PC-9 (cell line): ENCODE measurements at regions of chr17 and their contacts with region 1.

Region 1: GRCh38 chr17:81808778-81809555 is 5.0 kb downstream of the GCGR start:
- DNase-seq: no peak
- H3K4me3 ChIP-seq: no peak overlapping the region
- H3K27ac ChIP-seq: no peak overlapping the region
- H3K4me1 ChIP-seq: no peaks in the 10 kb centered on the region
- H3K27me3 ChIP-seq: peaks cover 33% of the 10 kb centered on the region; the same call in 1 of the 2 replicates
- CTCF ChIP-seq: no peak; the same call in 1 of the 2 replicates

Region 2: GRCh38 chr17:80235715-80236114 is 1573.3 kb before region 1 on chr17:
- CTCF ChIA-PET with region 1: no interaction called
- POLR2A ChIA-PET with region 1: interaction called, 34 read pairs
- intact Hi-C with region 1: no loop called
- DNase-seq: no peak
- H3K4me3 ChIP-seq: no peak overlapping the region
- H3K27ac ChIP-seq: no peak overlapping the region
- H3K4me1 ChIP-seq: no peaks in the 10 kb centered on the region
- H3K27me3 ChIP-seq: no peaks in the 10 kb centered on the region
- CTCF ChIP-seq: no peak

Region 3: GRCh38 chr17:81621494-81622130 is 187.4 kb before region 1 on chr17:
- CTCF ChIA-PET with region 1: no interaction called
- POLR2A ChIA-PET with region 1: no interaction called
- intact Hi-C with region 1: no loop called
- DNase-seq: no peak
- H3K4me3 ChIP-seq: no peak overlapping the region
- H3K27ac ChIP-seq: no peak overlapping the region
- H3K4me1 ChIP-seq: no peaks in the 10 kb centered on the region
- H3K27me3 ChIP-seq: no peaks in the 10 kb centered on the region
- CTCF ChIP-seq: no peak

Region 4: DNA sequence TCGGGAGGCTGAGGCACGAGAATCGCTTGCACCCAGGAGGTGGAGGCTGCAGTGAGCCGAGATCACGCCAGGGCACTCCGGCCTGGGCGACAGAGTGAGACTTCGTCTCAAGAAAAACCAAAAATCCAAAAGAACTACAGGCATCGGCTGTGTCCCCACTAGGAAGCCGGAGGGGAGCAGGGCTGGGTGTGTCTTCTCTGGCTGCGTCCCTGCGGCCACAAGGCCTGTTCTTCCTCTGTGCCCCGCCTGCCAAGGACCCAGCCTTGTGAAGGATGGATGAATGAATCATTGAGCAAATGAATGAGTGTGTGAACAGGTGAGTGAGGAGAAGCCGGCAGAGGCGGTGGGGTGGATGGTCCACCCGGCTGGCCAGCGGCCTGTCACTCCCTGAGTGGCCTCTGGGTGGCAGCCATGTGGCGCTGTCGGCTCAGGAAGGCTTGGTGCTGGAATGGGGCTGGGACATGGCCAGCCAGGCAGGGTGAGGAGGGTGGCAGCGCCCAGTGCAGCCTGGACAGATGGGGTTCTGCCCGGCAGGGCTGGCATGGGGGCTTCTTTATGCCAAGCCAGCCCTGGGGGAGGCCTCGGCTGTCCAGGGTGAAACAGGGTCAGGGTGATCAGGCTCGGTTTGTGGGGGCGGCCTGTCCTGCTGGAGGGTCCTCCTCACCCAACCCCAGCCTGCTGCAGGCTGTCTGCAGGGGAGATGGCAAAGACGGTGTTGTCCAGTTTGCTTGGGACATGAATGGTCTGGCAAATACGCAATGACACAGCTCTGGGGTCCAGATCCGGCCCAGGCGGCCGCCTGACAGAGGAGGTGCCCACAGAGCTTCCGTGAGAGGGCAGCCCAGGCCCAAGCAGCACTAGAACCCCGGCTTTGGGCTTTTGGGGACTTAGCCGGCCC is 75.2 kb before region 1 on chr17:
- CTCF ChIA-PET with region 1: interaction called, 10 read pairs
- POLR2A ChIA-PET with region 1: no interaction called
- intact Hi-C with region 1: no loop called
- DNase-seq: peak; percentile 55 to 92
- H3K4me3 ChIP-seq: no peak overlapping the region
- H3K27ac ChIP-seq: no peak overlapping the region
- H3K4me1 ChIP-seq: no peaks in the 10 kb centered on the region
- H3K27me3 ChIP-seq: no peaks in the 10 kb centered on the region
- CTCF ChIP-seq: peak; percentile 81

Region 5: GRCh38 chr17:81821603-81822311 is 12.8 kb after region 1 on chr17:
- CTCF ChIA-PET with region 1: interaction called, 23 read pairs
- POLR2A ChIA-PET with region 1: no interaction called
- intact Hi-C with region 1: no loop called
- DNase-seq: peak in 1 of 2 experiments; percentile 80
- H3K4me3 ChIP-seq: no peak overlapping the region
- H3K27ac ChIP-seq: no peak overlapping the region
- H3K4me1 ChIP-seq: no peaks in the 10 kb centered on the region
- H3K27me3 ChIP-seq: no peaks in the 10 kb centered on the region
- CTCF ChIP-seq: no peak; the same call in 1 of the 2 replicates

Region 6: DNA sequence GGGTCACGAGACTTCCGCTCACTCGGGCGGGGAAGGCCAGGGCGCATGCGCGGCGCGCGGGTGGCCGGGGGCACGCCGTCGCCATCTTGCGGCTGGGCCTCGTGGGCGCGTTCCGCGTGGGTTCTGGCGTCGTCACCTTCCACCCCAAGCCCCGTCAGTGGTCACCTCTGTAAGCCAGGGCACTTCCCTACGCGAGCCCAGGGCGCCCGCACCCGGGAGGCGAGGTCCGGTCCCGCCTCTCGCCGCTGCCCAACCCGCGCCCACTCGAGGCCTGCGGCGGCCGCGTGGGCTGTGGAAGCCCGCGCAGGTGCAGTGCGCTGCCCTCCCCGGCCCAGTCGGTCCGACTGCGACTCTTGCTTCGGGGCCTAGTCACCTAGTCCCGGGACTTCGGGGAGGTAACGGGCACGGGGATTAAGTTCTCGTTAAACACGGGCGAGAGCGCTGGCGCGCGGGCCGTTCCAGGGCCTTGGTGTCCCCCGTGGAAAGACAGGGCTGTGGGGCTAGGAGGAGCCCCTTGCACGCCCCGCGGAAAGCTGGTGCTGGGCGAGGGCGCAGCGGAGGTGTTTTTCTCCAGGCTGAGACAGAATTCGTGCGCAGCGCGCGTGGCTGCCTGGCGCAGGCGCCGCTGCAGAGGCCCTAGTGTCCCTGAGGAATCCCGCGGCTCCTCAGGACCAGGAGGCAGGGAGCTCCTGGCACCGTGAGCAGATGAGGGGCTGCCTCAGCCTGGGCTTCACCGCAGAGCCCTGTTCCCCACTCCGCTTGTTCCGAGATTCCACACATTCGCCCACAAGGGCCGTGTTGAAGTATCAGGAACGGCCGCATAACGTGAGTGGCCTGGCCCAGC is 62.6 kb after region 1 on chr17:
- CTCF ChIA-PET with region 1: no interaction called
- POLR2A ChIA-PET with region 1: interaction called, 25 read pairs
- intact Hi-C with region 1: no loop called
- DNase-seq: peak; percentile 47 to 91
- H3K4me3 ChIP-seq: peak overlapping the region; percentile 88
- H3K27ac ChIP-seq: peak overlapping the region; percentile 87
- H3K4me1 ChIP-seq: 0 out of 2 replicates have a peak, but pooled peaks cover 14% of the 10 kb centered on the region
- H3K27me3 ChIP-seq: no peaks in the 10 kb centered on the region
- CTCF ChIP-seq: no peak; the same call in 1 of the 2 replicates